ENCODE measurements at regions of chr2 and their contacts with region 1.

Region 1: DNA sequence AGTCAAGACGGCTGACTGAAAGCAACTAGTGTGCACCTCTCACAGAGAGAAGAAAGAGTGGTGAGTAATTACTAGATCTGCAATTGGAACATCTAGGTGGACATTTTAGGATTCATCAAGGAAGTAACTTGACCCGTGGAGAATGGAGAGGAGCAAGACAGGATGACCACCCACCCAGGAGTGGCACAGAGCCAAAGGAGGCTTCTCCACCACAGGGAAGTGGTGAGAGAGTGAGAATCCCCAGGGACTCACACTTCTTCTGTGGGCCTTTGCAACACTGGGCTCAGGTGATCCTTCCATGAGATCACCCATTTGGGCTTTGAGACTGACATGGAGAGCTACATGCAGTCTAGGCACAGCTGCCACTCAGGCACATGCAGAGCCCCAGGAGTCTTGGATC is 132.8 kb upstream of the GALNT5 start:
- DNase-seq: no peak
- H3K4me3 ChIP-seq: no peak overlapping the region
- H3K27ac ChIP-seq: no peak overlapping the region
- H3K4me1 ChIP-seq: no peaks in the 10 kb centered on the region
- H3K27me3 ChIP-seq: no peaks in the 10 kb centered on the region
- CTCF ChIP-seq: no peak
- EP300 ChIP-seq: no peak
- POLR2A ChIP-seq: no peak

Region 2: GRCh38 chr2:157160131-157160530 is 35.4 kb after region 1 on chr2:
- in situ Hi-C with region 1: no loop called
- intact Hi-C with region 1: no loop called
- DNase-seq: no peak
- H3K4me3 ChIP-seq: no peak overlapping the region
- H3K27ac ChIP-seq: peak overlapping the region; percentile 56 to 74 (median 72)
- H3K4me1 ChIP-seq: peaks cover 0 to 17% (median 10%) of the 10 kb centered on the region in 4 donors
- H3K27me3 ChIP-seq: no peaks in the 10 kb centered on the region
- CTCF ChIP-seq: no peak
- EP300 ChIP-seq: no peak
- POLR2A ChIP-seq: no peak

Region 3: DNA sequence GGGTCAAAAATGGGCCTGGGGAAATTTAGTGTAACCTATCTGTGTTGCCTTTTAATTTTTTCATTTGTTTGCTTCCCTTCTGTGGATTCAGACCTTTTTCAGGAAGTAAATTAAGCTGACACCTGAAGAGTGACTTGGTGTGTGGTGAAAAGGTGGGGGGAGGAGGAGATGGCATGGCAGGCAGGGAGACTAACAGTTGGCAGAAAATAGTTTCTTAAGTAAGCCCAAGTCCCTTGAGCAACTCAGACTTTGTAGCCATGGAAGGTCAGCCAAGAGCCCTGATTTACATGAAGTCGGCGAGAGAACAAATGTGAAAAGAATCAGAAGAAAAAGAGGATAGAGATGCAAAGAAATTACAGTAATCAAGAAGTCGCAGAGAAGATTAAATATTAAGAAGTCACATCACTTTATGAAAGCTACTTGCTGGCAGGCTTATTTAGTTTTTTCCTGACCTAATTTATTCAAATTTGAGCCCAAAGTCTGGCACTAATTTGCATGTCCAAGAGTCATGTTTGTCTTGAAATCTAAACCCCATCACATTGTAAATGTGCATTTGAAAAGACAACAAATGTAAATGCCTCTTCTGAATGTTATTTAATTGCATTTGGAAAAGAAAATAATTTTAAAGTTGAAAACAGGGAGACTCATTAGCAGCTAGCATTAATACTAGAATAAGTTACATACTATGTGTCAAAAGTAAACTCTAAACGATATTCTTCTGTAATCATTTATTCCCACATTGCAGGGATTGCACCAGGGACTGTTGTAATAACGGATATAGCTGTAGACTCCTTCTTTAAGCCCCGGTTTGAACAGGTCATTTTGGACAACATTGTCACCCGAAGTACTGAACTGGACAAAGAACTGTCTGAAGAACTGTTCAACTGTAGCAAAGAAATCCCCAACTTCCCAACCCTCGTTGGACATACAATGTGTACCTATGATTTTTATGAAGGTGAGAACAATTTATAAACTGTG is 996.2 kb after region 1 on chr2:
- in situ Hi-C with region 1: no loop called
- intact Hi-C with region 1: loop called (anchors 5 kb)
- DNase-seq: no peak
- H3K4me3 ChIP-seq: no peak overlapping the region
- H3K27ac ChIP-seq: no peak overlapping the region
- H3K4me1 ChIP-seq: peaks cover 0 to 13% (median 5%) of the 10 kb centered on the region in 4 donors
- H3K27me3 ChIP-seq: no peaks in the 10 kb centered on the region
- CTCF ChIP-seq: no peak
- EP300 ChIP-seq: no peak
- POLR2A ChIP-seq: no peak